ENCODE measurements at regions of chr14 and their contacts with region 1.

Region 1: GRCh38 chr14:78566026-78566858 is 396.1 kb downstream of the NRXN3 start:
- DNase-seq: peak; percentile 59
- H3K4me3 Mint-ChIP-seq: no peak overlapping the region
- H3K27ac Mint-ChIP-seq: no peak overlapping the region
- H3K4me1 Mint-ChIP-seq: no peaks in the 10 kb centered on the region
- H3K27me3 Mint-ChIP-seq: no peaks in the 10 kb centered on the region
- CTCF ChIP-seq: peak; percentile 71

Region 2: GRCh38 chr14:77457522-77458290 is 1108.5 kb before region 1 on chr14 and contains the starts of genes AHSA1 and VIPAS39:
- CTCF ChIA-PET with region 1: no interaction called
- POLR2A ChIA-PET with region 1: no interaction called
- intact Hi-C with region 1: no loop called
- DNase-seq: peak; percentile 99
- H3K4me3 Mint-ChIP-seq: peak within 1 kb of the TSS; percentile 96
- H3K27ac Mint-ChIP-seq: peak within 1 kb of the TSS; percentile 95
- H3K4me1 Mint-ChIP-seq: peaks cover 14% of the 10 kb centered on the region
- H3K27me3 Mint-ChIP-seq: no peaks in the 10 kb centered on the region
- CTCF ChIP-seq: no peak
- total RNA-seq, gene AHSA1: 77.7 and 78.5 TPM in 2 replicates
- total RNA-seq, gene VIPAS39: 18.7 and 19.8 TPM in 2 replicates

Region 3: DNA sequence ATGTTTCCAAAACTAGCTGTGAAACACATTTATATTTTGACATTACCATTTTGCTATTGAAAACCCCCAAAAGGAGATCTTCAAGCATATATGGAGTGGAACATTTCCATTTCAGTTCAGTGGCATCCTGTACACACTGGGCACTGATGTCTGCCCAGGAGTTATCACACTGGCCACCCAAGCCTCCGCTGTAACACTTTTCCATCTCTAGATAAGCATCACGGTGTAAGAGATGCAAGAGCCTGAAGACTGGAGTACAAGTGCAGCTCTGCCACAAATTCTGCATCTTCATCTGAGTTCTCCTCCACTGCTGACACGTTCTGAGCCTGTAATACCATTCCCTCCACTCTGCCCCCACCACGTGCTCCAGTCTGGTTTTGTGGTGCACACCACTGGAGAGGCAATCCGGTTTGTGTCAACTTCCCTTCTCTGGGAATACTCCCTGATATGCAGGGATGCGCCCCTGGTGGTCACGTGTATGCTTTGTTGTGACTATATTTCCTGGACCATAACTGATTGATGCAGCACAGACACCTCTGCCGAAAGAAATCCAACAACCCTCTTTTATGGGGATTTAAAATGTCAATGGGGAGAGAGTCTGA is 962.5 kb before region 1 on chr14:
- CTCF ChIA-PET with region 1: no interaction called
- POLR2A ChIA-PET with region 1: no interaction called
- intact Hi-C with region 1: no loop called
- DNase-seq: no peak
- H3K4me3 Mint-ChIP-seq: no peak overlapping the region
- H3K27ac Mint-ChIP-seq: no peak overlapping the region
- H3K4me1 Mint-ChIP-seq: peaks cover 20% of the 10 kb centered on the region
- H3K27me3 Mint-ChIP-seq: no peaks in the 10 kb centered on the region
- CTCF ChIP-seq: peak; percentile 18

Region 4: GRCh38 chr14:77862154-77862786 is 704.0 kb before region 1 on chr14:
- CTCF ChIA-PET with region 1: interaction called, 117 read pairs
- POLR2A ChIA-PET with region 1: no interaction called
- intact Hi-C with region 1: loop called (anchors 1 kb)
- DNase-seq: peak; percentile 58
- H3K4me3 Mint-ChIP-seq: no peak overlapping the region
- H3K27ac Mint-ChIP-seq: no peak overlapping the region
- H3K4me1 Mint-ChIP-seq: peaks cover 7% of the 10 kb centered on the region
- H3K27me3 Mint-ChIP-seq: no peaks in the 10 kb centered on the region
- CTCF ChIP-seq: peak; percentile 94

Region 5: GRCh38 chr14:78141590-78141989 is 424.7 kb before region 1 on chr14:
- CTCF ChIA-PET with region 1: interaction called, 5 read pairs
- POLR2A ChIA-PET with region 1: no interaction called
- intact Hi-C with region 1: loop called (anchors 2 kb)
- DNase-seq: no peak
- H3K4me3 Mint-ChIP-seq: no peak overlapping the region
- H3K27ac Mint-ChIP-seq: no peak overlapping the region
- H3K4me1 Mint-ChIP-seq: no peaks in the 10 kb centered on the region
- H3K27me3 Mint-ChIP-seq: peaks cover 12% of the 10 kb centered on the region
- CTCF ChIP-seq: no peak

Region 6: DNA sequence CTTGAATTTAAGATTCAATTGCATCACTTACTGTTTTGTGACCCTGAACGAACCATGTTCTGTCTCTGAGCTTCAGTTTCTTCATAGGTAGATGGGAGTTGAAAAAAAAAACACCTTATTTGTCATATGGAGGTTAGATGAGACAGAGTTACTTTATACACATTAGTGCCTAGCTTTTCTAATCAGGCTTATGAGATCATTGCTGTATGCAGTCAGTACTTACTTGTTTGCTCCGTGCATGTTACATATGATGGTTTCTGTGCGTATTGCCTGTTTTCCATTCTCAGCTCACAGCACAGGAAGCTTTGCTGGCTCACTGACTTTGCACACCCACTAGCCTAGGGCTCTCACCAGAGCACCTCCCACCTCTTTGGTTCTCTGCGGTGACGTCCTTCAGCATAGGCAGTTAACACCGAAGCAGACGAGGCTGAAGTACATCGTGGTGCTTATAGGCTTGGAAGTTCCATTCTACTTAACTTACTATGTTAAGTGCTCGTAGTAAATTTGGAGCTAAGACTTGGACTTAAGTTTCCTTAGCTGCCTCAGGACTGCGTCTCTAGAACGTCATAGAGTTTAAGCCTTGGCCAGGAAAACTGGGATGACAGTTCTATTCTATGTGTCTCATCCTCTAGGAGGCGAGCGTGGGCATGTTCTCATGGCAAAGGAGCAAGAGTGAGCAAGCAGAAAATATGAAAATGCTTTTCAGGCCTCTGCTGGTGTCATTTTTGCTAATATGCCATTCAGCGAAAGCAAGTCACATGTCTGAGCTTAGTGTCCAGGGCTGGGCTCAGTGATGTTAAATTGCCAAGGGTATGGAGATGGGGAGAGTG is 338.8 kb before region 1 on chr14:
- CTCF ChIA-PET with region 1: interaction called, 12 read pairs
- POLR2A ChIA-PET with region 1: no interaction called
- intact Hi-C with region 1: loop called (anchors 1 kb)
- DNase-seq: peak; percentile 44
- H3K4me3 Mint-ChIP-seq: no peak overlapping the region
- H3K27ac Mint-ChIP-seq: no peak overlapping the region
- H3K4me1 Mint-ChIP-seq: no peaks in the 10 kb centered on the region
- H3K27me3 Mint-ChIP-seq: peaks cover 32% of the 10 kb centered on the region
- CTCF ChIP-seq: no peak

Region 7: DNA sequence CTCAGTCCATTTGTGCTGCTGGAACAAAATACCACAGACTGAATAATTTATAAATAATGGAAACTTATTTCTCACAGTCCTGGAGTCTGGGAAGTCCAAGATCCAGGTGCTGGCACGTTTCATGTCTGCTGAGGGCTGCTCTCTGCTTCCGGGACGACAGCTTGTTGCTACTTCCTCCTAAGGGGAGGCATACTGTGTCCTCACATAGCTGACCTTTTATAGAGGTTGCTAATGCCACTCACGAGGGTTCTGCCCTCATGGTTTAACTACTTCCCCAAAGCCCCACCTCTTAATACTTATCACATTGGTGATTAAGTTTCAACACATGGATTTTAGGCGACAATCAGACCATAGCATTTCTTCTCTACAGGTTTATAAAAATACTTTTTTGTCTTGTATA is 15.0 kb after region 1 on chr14:
- CTCF ChIA-PET with region 1: interaction called, 35 read pairs
- POLR2A ChIA-PET with region 1: no interaction called
- intact Hi-C with region 1: no loop called
- DNase-seq: no peak
- H3K4me3 Mint-ChIP-seq: no peak overlapping the region
- H3K27ac Mint-ChIP-seq: no peak overlapping the region
- H3K4me1 Mint-ChIP-seq: no peaks in the 10 kb centered on the region
- H3K27me3 Mint-ChIP-seq: peaks cover 18% of the 10 kb centered on the region
- CTCF ChIP-seq: no peak

Region 8: GRCh38 chr14:78598041-78598920 is 32.0 kb after region 1 on chr14:
- CTCF ChIA-PET with region 1: interaction called, 13 read pairs
- POLR2A ChIA-PET with region 1: no interaction called
- intact Hi-C with region 1: no loop called
- DNase-seq: peak; percentile 52
- H3K4me3 Mint-ChIP-seq: no peak overlapping the region
- H3K27ac Mint-ChIP-seq: no peak overlapping the region
- H3K4me1 Mint-ChIP-seq: no peaks in the 10 kb centered on the region
- H3K27me3 Mint-ChIP-seq: peaks cover 38% of the 10 kb centered on the region
- CTCF ChIP-seq: peak; percentile 91

Region 9: DNA sequence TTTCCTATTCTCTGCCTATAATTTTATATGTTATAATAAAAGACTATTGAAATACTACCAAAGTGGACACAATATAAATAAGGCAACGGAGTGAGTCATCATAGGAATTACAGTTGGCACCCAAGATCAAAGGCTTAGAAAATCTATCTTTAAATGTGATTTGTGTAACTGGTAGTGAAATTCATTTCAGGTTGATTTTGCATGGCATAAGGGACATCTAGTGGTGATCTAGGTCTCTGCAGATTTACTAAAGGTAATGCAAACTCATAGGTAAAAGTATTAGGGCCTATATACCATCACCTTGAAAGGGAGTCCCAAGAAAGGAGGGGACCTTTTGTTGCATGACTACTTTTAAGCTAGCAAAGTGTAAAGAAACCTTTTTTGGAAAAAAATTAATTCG is 131.1 kb after region 1 on chr14:
- CTCF ChIA-PET with region 1: interaction called, 12 read pairs
- POLR2A ChIA-PET with region 1: no interaction called
- intact Hi-C with region 1: no loop called
- DNase-seq: peak; percentile 33
- H3K4me3 Mint-ChIP-seq: no peak overlapping the region
- H3K27ac Mint-ChIP-seq: no peak overlapping the region
- H3K4me1 Mint-ChIP-seq: no peaks in the 10 kb centered on the region
- H3K27me3 Mint-ChIP-seq: peaks cover 69% of the 10 kb centered on the region
- CTCF ChIP-seq: peak; percentile 69